ENCODE measurements at regions of chr9 and their contacts with region 1.

Region 1: DNA sequence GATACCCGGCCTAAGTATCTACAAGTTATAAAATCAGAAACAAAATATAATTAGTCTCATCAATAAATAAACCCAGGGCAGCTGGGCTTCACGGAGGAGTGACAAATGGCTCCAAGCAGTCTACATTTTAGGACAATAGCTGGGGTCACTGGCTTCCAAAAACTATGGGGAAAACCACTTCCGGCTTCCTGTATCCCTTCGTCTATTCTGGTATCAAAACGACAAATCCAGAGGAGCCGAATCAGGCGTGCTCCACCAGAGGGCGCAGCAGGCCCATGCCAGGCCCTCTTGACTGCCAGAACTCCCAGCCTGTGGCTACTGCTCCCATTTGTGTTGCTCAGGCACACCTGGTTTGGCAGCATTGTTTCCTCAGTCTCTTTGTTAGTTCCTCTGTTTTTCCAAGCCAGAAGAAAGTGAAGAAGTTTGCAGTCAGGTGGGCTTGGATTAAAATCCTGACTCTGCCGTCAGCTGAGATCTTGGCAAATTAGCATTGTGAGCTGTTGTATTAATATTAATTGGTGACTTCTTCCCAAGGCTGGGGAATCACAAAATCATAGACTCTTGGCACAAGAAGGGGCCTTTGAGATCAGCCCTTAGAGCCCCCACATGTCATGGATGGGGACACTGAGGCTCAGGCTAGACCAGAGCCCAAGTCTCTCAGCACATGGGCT is 11.6 kb upstream of the RAB14 start:
- DNase-seq: peak; percentile 63 to 85
- ATAC-seq: peak; percentile 97 to 98
- H3K4me3 ChIP-seq: no peak overlapping the region
- H3K27ac ChIP-seq: peak overlapping the region; percentile 45 to 67 (median 49)
- H3K4me1 ChIP-seq: peaks cover 0 to 6% of the 10 kb centered on the region in 2 donors
- H3K27me3 ChIP-seq: no peaks in the 10 kb centered on the region
- CTCF ChIP-seq: peak; percentile 90 to 97 (median 95)
- POLR2A ChIP-seq: no peak

Region 2: DNA sequence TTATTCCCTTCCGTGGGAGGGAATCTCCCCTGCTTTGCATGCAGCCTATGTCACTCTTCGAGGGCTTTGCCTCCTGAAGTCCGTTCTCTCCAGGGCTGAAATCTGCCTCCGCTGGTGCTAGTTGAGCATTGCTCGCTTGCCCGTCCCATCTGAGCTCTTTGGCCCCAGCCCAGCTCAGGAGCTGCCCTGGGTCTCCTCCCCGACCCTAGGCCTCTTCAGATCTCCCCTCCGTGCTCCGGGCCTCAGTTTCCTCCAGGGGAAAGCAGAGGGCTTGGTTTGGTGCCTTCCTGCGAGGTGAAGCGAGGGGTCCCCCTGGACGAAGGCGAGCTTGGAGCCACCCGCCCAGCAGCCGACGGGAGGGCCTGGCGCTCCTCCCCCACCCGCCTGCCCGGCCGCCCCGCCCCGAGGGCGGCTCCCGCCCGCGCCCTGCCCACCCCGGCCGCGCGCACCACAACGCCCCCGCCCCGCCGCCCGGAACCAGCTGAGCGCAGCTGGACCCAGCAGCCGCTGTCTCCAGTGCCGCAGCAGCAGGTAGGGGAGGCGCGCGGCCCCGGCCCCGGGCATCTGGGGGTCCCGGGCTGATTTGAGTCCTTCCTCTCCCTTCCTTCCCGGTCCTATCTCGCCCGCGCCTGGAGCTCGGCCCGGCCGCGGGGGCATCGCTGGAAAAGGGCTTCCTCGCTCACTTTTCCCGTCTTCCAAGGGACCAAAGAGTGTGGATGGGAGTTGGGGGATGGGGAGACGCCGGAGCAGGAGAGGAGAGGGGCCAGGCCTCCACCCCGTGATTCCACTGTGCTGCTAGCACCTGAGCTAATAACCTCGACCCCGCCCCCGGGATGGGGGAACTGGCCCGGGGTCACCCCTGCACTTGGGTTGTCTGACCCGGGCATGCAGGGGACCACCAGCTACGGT is 54.7 kb after region 1 on chr9 and contains the start of gene GSN:
- in situ Hi-C with region 1: loop called in 1 of 4 experiments (anchors 10 kb)
- intact Hi-C with region 1: no loop called
- DNase-seq: peak; percentile 58 to 62
- ATAC-seq: peak; percentile 61 to 78
- H3K4me3 ChIP-seq: peak within 1 kb of the TSS; percentile 75 to 95 (median 84)
- H3K27ac ChIP-seq: peak within 1 kb of the TSS; percentile 67 to 81 (median 73)
- H3K4me1 ChIP-seq: peaks cover 38 to 53% of the 10 kb centered on the region in 2 donors
- H3K27me3 ChIP-seq: no peaks in the 10 kb centered on the region
- CTCF ChIP-seq: no peak
- POLR2A ChIP-seq: peak; percentile 78 to 80
- total RNA-seq, gene GSN: 487 to 785 (median 662) TPM

Region 3: DNA sequence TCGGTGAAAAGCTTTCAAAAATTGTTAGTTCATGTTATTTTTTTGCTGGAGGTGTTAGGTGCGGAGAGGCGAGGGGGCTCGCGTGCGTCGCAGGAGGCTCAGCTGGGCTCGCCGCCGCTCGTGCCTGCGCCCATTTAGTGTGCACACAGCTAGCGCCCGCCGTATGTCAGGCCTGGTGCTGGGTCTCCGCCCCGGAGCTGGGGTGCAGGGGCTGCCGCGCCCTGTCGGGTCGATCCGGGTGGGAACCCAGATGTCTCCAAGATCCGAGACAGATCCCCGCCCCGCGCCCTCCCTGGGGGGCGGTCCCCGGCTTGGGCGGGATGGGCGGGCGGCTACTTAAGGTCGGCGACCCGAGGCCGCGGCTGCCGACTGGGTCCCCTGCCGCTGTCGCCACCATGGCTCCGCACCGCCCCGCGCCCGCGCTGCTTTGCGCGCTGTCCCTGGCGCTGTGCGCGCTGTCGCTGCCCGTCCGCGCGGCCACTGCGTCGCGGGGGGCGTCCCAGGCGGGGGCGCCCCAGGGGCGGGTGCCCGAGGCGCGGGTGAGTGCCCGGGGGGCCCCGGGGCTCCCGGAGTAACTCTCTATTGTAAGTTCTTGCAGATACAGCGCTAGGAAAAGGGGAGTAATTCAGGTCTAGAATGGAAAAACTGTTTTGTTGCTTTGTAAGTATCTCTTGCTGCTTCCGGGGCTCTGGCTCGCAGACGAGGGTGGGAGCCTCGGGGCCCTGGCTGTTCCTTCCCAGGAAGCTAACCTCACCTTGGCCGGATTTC is 86.4 kb after region 1 on chr9:
- in situ Hi-C with region 1: loop called in 1 of 4 experiments (anchors 25 kb)
- intact Hi-C with region 1: loop called (anchors 5 kb)
- DNase-seq: peak; percentile 60 to 75
- ATAC-seq: peak; percentile 4 to 16
- H3K4me3 ChIP-seq: peak overlapping the region; percentile 56 to 58 (median 56)
- H3K27ac ChIP-seq: peak overlapping the region; percentile 89 to 95 (median 91)
- H3K4me1 ChIP-seq: peaks cover 54 to 58% of the 10 kb centered on the region in 2 donors
- H3K27me3 ChIP-seq: no peaks in the 10 kb centered on the region
- CTCF ChIP-seq: peak in 1 of 5 experiments; percentile 8
- POLR2A ChIP-seq: peak; percentile 51 to 82

Region 4: DNA sequence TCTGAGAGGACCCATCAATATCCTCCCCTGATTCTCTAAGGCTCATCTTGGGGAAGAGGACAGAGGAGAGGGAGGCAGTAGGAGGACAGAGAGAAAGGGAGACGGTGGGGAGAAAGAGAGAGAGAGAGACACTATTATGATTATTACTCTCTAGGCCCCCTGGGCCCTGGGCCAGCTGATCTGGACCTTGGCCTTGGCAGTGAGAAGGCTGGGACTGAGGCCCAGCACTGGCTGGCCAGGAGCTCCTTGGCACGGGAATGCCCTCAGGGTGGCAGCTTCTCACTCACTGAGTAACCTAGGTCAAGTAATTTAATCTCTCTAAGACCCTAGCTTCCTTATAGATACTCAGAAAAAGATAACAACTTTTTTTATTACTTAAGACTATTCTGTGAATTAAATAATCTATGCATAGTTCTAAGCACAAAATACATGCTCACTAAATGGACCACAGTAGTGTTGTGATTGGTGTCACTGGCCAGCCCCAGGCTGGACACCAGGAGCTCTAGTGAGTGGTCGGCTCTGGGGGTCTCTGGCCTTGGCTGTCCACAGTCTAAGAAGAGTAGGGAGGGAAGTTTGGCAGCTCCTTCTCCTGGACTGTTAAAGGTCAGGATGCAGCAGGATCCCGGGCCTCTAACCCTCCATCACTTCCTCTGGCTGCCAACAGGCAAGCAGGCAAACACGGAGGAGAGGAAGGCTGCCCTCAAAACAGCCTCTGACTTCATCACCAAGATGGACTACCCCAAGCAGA is 104.6 kb after region 1 on chr9:
- in situ Hi-C with region 1: loop called (anchors 10 to 25 kb)
- intact Hi-C with region 1: loop called (anchors 5 kb)
- DNase-seq: no peak
- ATAC-seq: no peak
- H3K4me3 ChIP-seq: no peak overlapping the region
- H3K27ac ChIP-seq: peak overlapping the region; percentile 62 to 91 (median 88)
- H3K4me1 ChIP-seq: peaks cover 0 to 22% of the 10 kb centered on the region in 2 donors
- H3K27me3 ChIP-seq: no peaks in the 10 kb centered on the region
- CTCF ChIP-seq: no peak
- POLR2A ChIP-seq: no peak

Region 5: DNA sequence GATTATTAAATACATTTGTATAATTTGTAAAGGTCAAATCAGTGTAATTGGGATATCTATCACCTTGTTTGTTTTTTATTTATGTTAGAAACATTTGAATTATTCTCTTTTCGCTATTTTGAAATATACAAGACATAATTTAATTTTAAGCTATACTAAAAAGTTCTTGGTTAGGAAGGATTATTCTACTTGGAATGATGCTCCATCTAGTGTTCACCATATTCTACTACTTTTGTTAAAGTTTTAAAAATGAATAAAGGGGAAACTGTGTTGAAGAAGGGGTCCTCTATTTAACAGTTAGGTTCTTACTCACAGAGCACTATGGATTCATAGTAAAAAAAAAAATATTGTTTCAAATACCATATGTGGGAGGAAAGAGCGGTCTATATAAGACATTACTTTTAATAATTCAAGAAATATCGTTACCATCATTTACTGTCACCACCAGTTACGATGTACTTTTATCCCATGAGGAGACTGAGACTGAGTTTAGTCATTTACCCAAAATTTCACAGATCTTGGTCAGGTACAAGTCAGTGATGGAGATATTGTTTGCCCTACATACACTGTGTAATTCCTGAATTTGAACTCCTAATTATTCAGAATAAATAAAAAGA is 163.1 kb after region 1 on chr9:
- in situ Hi-C with region 1: no loop called
- intact Hi-C with region 1: loop called (anchors 5 kb)
- DNase-seq: no peak
- ATAC-seq: no peak
- H3K4me3 ChIP-seq: no peak overlapping the region
- H3K27ac ChIP-seq: peak overlapping the region in 1 of 4 donors; percentile 97
- H3K4me1 ChIP-seq: peaks cover 27 to 37% of the 10 kb centered on the region in 2 donors
- H3K27me3 ChIP-seq: no peaks in the 10 kb centered on the region
- CTCF ChIP-seq: peak; percentile 18 to 58 (median 37)
- POLR2A ChIP-seq: no peak

Region 6: GRCh38 chr9:121399883-121400607 is 186.8 kb after region 1 on chr9:
- in situ Hi-C with region 1: loop called (anchors 5 kb)
- intact Hi-C with region 1: loop called (anchors 1 kb)
- DNase-seq: no peak
- ATAC-seq: peak; percentile 80 to 87
- H3K4me3 ChIP-seq: no peak overlapping the region
- H3K27ac ChIP-seq: no peak overlapping the region
- H3K4me1 ChIP-seq: no peaks in the 10 kb centered on the region
- H3K27me3 ChIP-seq: no peaks in the 10 kb centered on the region
- CTCF ChIP-seq: peak; percentile 69 to 91 (median 77)
- POLR2A ChIP-seq: no peak

Measured in gastrocnemius medialis (tissue), 4 donors.